Activated CD4-positive, alpha-beta T cell treated with anti-CD3 and anti-CD28 coated beads for 36 hours (primary cell): ENCODE measurements at regions of chr12 and their contacts with region 1.

Region 1: DNA sequence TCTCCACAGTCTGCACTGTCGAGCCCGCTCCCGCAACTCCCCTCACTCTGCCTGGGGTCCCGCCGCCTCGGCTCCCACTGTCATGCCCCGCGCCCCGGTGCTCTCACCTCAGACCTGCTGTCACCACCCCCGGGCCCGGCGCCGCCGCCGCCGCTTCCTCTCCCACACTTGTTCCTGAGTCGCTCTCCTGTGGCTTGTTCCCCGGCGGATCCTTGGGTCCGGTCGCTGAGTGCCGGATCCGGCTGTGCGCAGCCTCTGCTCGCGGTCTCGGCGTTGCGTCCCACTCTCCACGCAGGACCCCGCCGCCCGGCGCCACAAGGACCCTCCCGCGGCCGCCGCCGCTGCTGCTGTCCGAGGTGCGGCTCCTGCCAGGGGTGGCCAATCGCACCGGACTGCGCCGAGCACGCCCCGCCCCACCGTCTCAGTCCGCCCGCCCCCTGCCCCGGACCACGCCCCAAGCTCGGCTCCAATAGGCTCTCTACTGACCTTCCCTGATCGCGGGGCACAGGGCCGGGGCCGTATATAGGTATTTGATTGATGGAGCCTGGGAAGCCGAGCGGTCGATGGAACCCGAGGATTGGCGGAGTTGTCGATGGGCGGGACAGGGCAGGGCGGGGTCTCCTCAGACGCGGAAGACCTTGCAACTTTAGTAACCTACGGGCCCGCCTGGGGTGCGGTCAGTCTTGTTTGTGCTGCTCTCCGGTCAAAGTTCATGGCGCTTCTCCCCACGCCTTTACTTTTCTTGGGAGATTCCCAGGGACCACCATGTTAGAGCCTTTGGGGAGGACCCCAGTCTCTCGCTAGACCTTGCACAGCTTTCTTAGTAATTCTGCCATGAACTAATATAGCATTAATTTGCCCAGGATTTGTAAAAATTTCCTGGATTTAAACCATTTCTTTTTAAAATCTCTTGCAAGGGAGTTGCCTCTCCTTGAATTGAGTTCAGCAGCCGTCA is at the start of gene TAOK3:
- DNase-seq: peak; percentile 99
- ATAC-seq: peak; percentile 91
- H3K4me3 Mint-ChIP-seq: peak within 1 kb of the TSS; percentile 91
- H3K27ac Mint-ChIP-seq: peak within 1 kb of the TSS; percentile 93
- H3K4me1 Mint-ChIP-seq: peaks cover 39% of the 10 kb centered on the region
- H3K27me3 Mint-ChIP-seq: no peaks in the 10 kb centered on the region
- total RNA-seq, gene TAOK3: 49.4 to 51.1 TPM

Region 2: DNA sequence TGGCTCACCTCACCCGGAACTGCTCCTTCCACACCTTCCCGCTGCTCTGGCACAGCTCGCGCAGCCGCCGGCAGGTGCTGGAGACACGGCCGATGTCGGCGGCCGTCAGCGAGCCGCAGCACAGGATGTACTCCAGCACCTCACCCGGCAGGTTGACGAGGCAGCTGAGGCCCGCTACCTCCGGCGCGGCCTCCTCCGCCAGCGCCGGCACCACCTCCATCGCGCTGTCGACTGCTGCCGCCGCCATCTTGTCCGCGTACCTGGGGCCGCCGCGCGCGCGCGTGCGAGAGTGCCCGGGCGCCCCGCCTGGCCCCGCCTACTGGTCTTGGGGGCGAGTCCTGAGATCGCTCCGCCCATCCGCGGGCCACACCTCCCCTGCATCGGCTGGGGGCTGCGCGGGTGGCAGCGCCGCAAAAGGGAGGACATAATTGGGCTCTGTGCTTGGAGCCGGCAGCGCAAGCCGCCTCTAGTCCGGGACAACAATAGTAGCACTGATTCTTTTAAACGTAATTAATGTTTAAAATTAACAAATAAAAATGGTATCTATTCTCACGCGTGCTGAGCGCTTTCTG is 1182.5 kb before region 1 on chr12 and contains the start of gene FBXO21:
- CTCF ChIA-PET with region 1: interaction called, 3 read pairs
- POLR2A ChIA-PET with region 1: no interaction called
- intact Hi-C with region 1: loop called in 1 of 2 experiments (anchors 1 kb)
- DNase-seq: peak; percentile 96
- ATAC-seq: peak; percentile 97
- H3K4me3 Mint-ChIP-seq: peak within 1 kb of the TSS; percentile 95
- H3K27ac Mint-ChIP-seq: peak within 1 kb of the TSS; percentile 90
- H3K4me1 Mint-ChIP-seq: peaks cover 27% of the 10 kb centered on the region
- H3K27me3 Mint-ChIP-seq: no peaks in the 10 kb centered on the region
- total RNA-seq, gene FBXO21: 22.8 to 28.2 TPM

Region 3: DNA sequence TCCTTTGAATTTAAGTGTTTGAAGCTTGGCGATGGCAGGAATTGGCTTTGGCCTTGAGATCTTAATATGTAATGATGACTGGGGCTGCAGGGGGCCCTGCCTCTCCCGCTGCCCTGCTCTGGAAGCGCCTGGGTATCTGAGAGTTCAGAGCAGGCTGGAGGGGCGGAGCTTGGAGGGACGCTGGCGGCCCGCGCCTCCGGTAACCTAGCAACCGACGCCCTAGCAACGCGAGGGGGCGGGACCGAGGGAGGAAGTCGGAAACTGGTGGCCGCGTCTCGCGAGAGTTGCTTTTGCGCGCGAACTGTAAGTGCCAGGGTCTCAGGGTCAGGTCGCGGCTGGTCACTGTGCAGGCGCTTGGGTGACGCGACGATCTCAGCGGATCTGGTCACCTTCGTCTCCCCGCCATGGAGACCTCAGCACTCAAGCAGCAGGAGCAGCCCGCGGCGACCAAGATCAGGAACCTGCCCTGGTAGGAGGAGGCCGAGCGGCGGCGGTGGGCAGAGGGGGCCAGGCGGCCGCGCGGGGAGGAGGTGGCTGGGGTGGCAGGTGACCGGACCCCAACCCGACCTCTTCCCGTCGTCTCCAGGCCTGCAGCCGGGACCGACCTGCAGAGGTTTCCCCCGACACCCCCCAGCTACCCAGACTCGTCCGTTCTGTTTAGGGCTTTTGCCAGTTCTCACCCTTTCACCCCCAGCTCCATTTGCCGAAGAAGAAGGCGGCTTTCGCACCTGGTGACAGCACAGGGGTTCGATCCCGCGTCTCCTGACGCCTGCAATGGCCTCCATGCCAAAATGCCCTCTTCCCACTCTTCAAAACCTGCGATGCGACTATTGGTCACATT is 356.2 kb before region 1 on chr12 and contains the start of gene RFC5:
- CTCF ChIA-PET with region 1: interaction called, 4 read pairs
- POLR2A ChIA-PET with region 1: interaction called, 3 read pairs
- intact Hi-C with region 1: loop called in 1 of 2 experiments (anchors 1 kb)
- DNase-seq: peak; percentile 99
- ATAC-seq: peak; percentile 98
- H3K4me3 Mint-ChIP-seq: peak within 1 kb of the TSS; percentile 97
- H3K27ac Mint-ChIP-seq: peak within 1 kb of the TSS; percentile 90
- H3K4me1 Mint-ChIP-seq: peaks cover 15% of the 10 kb centered on the region
- H3K27me3 Mint-ChIP-seq: no peaks in the 10 kb centered on the region
- total RNA-seq, gene RFC5: 63.0 to 78.9 TPM

Region 4: DNA sequence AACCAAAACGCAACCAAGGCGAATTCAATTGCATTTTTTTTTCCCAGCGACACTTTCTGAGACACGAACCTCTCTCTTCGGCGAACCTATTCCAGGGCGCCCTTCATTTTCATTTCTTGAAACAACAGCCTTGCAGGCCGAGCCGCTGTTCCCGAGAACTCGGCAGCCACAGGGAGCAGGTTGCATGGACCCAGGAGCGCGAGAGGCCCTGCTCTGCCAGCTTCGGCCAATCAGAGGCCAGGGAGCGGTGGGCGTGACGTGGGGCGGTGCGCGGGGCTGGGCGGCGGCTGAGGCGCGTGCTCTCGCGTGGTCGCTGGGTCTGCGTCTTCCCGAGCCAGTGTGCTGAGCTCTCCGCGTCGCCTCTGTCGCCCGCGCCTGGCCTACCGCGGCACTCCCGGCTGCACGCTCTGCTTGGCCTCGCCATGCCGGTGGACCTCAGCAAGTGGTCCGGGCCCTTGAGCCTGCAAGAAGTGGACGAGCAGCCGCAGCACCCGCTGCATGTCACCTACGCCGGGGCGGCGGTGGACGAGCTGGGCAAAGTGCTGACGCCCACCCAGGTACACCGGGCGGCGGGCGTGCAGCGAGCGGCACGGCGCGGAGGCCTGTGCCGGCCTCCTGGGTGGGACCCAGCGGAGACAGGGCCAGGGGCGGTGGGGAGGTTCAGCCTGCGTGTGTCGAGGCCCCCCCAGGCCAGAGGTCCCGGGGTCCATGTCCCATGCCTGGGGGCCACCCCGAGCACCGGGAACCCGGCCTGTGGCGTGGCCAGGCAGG is 236.8 kb before region 1 on chr12 and contains the start of gene PEBP1:
- CTCF ChIA-PET with region 1: interaction called, 14 read pairs
- POLR2A ChIA-PET with region 1: interaction called, 3 read pairs
- intact Hi-C with region 1: loop called (anchors 1 to 5 kb)
- DNase-seq: peak; percentile 97
- ATAC-seq: peak; percentile 99
- H3K4me3 Mint-ChIP-seq: peak within 1 kb of the TSS; percentile 88
- H3K27ac Mint-ChIP-seq: peak within 1 kb of the TSS; percentile 91
- H3K4me1 Mint-ChIP-seq: peaks cover 33% of the 10 kb centered on the region
- H3K27me3 Mint-ChIP-seq: no peaks in the 10 kb centered on the region
- total RNA-seq, gene PEBP1: 117 to 134 TPM

Region 5: GRCh38 chr12:118307069-118307954 is 65.5 kb before region 1 on chr12:
- CTCF ChIA-PET with region 1: interaction called, 12 read pairs
- POLR2A ChIA-PET with region 1: interaction called, 7 read pairs
- intact Hi-C with region 1: loop called (anchors 1 kb)
- DNase-seq: peak; percentile 71
- ATAC-seq: peak; percentile 80
- H3K4me3 Mint-ChIP-seq: peak overlapping the region; percentile 66
- H3K27ac Mint-ChIP-seq: peak overlapping the region; percentile 92
- H3K4me1 Mint-ChIP-seq: peaks cover 43% of the 10 kb centered on the region
- H3K27me3 Mint-ChIP-seq: no peaks in the 10 kb centered on the region

Region 6: GRCh38 chr12:118404876-118405521 is 32.2 kb after region 1 on chr12:
- CTCF ChIA-PET with region 1: interaction called, 12 read pairs
- POLR2A ChIA-PET with region 1: no interaction called
- intact Hi-C with region 1: no loop called
- DNase-seq: peak; percentile 80
- ATAC-seq: peak; percentile 57
- H3K4me3 Mint-ChIP-seq: no peak overlapping the region
- H3K27ac Mint-ChIP-seq: no peak overlapping the region
- H3K4me1 Mint-ChIP-seq: no peaks in the 10 kb centered on the region
- H3K27me3 Mint-ChIP-seq: no peaks in the 10 kb centered on the region

Region 7: DNA sequence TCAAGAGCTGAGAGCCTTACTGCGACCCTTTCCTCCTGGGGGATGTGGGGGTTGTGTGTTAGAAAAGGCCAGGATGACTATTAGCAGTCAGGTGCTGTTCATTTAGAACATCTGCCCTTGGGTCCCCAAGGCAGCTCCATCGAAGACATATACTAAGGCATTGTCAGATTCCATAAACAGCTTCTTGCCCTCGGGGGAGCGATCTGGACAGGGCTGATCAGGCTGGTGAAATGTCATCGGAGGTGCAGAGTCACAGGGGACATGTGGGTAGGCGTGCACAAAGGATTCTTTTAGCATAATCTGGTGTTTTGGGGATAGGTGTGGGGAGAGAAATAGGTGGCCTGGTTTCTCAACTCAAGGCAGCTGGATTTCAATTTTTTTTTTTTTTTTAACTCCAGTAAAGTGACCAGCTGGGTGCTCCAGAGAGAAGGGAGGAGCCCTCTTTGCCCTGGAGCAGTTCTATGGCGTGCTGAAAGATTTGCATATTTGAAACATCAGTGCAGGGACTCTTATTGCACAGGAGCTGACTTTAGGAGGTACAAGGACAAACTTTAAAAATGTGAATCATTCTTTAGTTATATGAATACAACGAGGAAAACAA is 163.6 kb after region 1 on chr12:
- CTCF ChIA-PET with region 1: no interaction called
- POLR2A ChIA-PET with region 1: no interaction called
- intact Hi-C with region 1: no loop called
- DNase-seq: no peak
- ATAC-seq: no peak
- H3K4me3 Mint-ChIP-seq: no peak overlapping the region
- H3K27ac Mint-ChIP-seq: no peak overlapping the region
- H3K4me1 Mint-ChIP-seq: no peaks in the 10 kb centered on the region
- H3K27me3 Mint-ChIP-seq: peaks cover 4% of the 10 kb centered on the region

Region 8: GRCh38 chr12:118611295-118611694 is 238.5 kb after region 1 on chr12:
- CTCF ChIA-PET with region 1: no interaction called
- POLR2A ChIA-PET with region 1: no interaction called
- intact Hi-C with region 1: no loop called
- DNase-seq: no peak
- ATAC-seq: no peak
- H3K4me3 Mint-ChIP-seq: no peak overlapping the region
- H3K27ac Mint-ChIP-seq: no peak overlapping the region
- H3K4me1 Mint-ChIP-seq: no peaks in the 10 kb centered on the region
- H3K27me3 Mint-ChIP-seq: peaks cover 1% of the 10 kb centered on the region

Region 9: GRCh38 chr12:120116792-120117651 is 1744.2 kb after region 1 on chr12:
- CTCF ChIA-PET with region 1: no interaction called
- POLR2A ChIA-PET with region 1: no interaction called
- intact Hi-C with region 1: loop called in 1 of 2 experiments (anchors 5 kb)
- DNase-seq: peak; percentile 99
- ATAC-seq: peak; percentile 68
- H3K4me3 Mint-ChIP-seq: peak overlapping the region; percentile 85
- H3K27ac Mint-ChIP-seq: peak overlapping the region; percentile 87
- H3K4me1 Mint-ChIP-seq: peaks cover 77% of the 10 kb centered on the region
- H3K27me3 Mint-ChIP-seq: no peaks in the 10 kb centered on the region